GM23248 (cell line): ENCODE measurements at regions of chr15 and their contacts with region 1.

Region 1: DNA sequence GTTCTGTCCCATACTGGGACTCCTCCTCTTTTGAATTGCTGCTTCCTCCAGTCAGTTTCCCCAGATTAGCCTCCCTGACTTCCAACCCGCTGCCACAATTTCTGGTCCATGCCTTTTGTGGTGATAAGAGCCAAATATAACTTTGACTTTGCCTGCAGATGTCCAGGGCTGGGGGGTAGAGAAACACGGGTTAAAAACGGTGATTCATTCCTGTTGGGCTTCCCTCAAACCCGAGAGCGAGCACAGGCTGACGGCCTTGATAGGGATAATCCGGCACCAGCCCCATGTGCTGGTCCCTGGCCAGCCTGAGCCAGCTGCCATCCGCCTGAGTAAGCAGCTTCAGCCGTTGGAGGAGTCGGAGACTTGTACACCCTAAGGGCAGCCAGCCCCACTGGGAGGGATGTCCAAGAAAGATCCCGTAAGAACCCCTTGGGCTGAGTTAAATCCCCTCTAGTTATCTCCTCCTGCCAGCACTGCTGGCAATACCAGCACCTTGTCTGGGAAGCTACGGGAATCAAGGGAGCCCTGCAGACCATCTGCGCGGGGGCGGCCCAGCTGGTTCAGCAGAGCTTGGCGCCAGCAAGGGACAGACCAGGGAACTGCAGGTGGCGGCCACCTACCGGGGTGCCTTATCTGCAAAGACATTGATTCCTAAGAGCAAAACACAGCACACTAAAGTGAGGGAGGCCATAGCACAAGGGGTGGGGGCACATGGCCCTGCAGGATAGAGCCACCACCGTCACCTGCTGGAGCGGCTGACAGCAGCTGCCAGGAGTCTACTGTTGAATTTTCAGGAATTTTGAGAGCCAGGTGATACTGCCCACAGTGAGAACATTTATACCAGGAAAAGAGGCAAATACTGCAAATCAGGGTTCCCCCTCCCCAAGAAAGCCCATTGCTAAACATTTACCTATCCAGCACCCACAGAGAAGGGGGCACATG is 18.1 kb downstream of the CSPG4 start:
- DNase-seq: peak; percentile 99
- H3K4me3 ChIP-seq: no peak overlapping the region
- H3K27ac ChIP-seq: peak overlapping the region; percentile 69
- H3K4me1 ChIP-seq: peaks cover 17% of the 10 kb centered on the region
- H3K27me3 ChIP-seq: no peaks in the 10 kb centered on the region

Region 2: DNA sequence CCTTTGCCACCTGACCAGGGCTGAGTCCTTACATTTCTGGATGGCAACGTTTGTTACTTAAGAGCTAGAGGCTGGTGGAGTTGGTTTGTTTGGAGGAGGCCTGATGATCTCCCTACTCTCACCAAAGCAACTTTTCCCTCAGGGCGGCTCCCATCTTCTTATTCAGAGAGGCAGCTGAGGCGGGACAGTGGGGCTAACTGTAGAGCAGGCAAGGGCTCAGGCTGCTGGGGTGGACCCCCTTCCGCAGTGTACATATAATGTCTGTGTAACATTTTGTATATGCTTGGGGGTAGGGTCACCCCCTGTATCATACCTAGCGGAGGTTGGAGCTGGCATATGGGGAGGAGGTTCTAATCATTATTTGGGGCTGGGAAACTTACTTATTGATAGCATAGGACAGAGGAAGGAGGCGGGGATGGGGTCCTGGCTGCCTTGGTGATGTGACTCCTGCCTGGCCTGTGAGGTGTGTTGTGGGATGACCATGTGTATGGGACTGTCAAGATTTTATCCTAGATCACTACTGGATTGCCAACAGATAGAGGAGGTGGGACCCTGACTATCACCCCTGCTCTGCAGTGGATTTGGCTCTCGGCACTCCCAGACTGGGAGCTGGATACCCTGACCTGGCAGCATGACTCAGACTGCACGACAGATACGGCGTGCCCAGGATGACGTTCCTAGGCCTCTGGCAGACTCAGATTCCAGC is 96.3 kb after region 1 on chr15:
- in situ Hi-C with region 1: loop called (anchors 10 kb)
- DNase-seq: no peak
- H3K4me3 ChIP-seq: no peak overlapping the region
- H3K27ac ChIP-seq: no peak overlapping the region
- H3K4me1 ChIP-seq: no peaks in the 10 kb centered on the region
- H3K27me3 ChIP-seq: peaks cover 48% of the 10 kb centered on the region